Right cardiac atrium (tissue), 5 donors: ENCODE measurements at regions of chr9 and their contacts with region 1.

Region 1: GRCh38 chr9:4984621-4985385 is at the start of gene JAK2:
- DNase-seq: peak; percentile 95 to 98 (median 97)
- ATAC-seq: peak; percentile 97 to 99
- H3K4me3 ChIP-seq: peak within 1 kb of the TSS; percentile 83
- H3K27ac ChIP-seq: peak within 1 kb of the TSS; percentile 95
- H3K4me1 ChIP-seq: peaks cover 6% of the 10 kb centered on the region
- H3K27me3 ChIP-seq: no peaks in the 10 kb centered on the region
- total RNA-seq, gene JAK2: 10.4 to 14.6 (median 12.2) TPM

Region 2: DNA sequence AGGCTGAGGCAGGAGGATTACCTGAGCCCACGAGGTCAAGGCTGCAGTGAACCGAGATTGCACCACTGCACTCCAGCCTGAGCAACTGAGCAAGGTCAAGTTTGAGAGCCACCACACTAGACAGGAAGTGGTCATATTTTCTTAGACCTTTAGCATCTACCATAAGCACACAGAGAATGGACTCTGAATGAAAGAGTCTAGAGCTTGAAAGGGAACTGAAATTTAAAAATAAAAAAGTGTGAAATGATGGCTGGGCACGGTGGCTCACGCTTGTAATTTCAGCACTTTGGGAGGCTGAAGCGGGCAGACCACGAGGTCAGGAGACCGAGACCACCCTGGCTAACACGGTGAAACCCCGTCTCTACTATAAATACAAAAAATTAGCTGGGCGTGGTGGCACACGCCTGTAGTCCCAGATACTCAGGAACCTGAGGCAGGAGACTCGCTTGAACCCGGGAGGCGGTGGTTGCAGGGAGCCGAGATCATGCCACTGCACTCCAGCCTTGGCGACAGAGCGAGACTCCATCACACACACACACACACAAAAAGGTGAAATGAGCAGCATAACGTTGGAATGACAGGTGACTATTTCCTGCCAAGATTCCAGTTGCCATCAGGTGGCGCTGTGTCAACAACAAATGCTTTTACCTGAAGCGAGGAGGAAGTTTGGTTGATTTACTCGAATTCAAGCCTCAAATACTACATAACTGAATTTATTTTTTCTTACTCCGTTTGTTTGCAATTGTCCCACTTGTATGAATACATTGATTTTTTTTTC is 222.5 kb before region 1 on chr9:
- intact Hi-C with region 1: loop called (anchors 5 to 10 kb)
- DNase-seq: peak; percentile 68 to 87 (median 77)
- ATAC-seq: peak; percentile 53 to 59
- H3K4me3 ChIP-seq: peak overlapping the region; percentile 41
- H3K27ac ChIP-seq: no peak overlapping the region
- H3K4me1 ChIP-seq: no peaks in the 10 kb centered on the region
- H3K27me3 ChIP-seq: no peaks in the 10 kb centered on the region

Region 3: GRCh38 chr9:4792572-4793458 is 192.0 kb before region 1 on chr9 and contains the start of gene RCL1:
- intact Hi-C with region 1: loop called in 1 of 4 experiments (anchors 10 kb)
- DNase-seq: peak; percentile 96 to 99 (median 98)
- ATAC-seq: peak; percentile 100
- H3K4me3 ChIP-seq: peak within 1 kb of the TSS; percentile 66
- H3K27ac ChIP-seq: peak within 1 kb of the TSS; percentile 5
- H3K4me1 ChIP-seq: peaks cover 7% of the 10 kb centered on the region
- H3K27me3 ChIP-seq: no peaks in the 10 kb centered on the region
- total RNA-seq, gene RCL1: 6.1 to 8.1 (median 6.6) TPM

Region 4: DNA sequence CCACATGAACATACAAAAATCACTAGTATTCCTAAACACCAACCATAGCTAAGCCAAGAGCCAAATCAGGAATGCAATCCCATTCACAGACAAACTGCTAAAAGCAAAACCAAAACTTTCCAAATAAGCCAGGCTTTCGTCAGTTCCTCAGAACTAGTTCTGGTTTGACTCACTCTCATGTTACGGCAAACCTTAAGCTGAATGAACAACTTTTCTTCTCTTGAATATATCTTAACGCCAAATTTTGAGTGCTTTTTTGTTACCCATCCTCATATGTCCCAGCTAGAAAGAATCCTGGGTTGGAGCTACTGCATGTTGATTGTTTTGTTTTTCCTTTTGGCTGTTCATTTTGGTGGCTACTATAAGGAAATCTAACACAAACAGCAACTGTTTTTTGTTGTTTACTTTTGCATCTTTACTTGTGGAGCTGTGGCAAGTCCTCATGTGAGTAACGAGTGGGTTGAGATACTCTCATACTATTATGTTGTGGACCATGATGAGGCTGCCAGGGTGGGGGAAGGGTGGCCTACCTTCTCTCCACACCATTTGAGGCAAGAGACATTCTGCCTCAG is 525.6 kb after region 1 on chr9 and contains the start of gene PDCD1LG2:
- intact Hi-C with region 1: no loop called
- DNase-seq: peak in 1 of 3 donors; percentile 72
- ATAC-seq: peak; percentile 68 to 77
- H3K4me3 ChIP-seq: peak within 1 kb of the TSS; percentile 33
- H3K27ac ChIP-seq: peak within 1 kb of the TSS; percentile 59
- H3K4me1 ChIP-seq: peaks cover 7% of the 10 kb centered on the region
- H3K27me3 ChIP-seq: no peaks in the 10 kb centered on the region
- total RNA-seq, gene PDCD1LG2: 2.3 to 3.3 (median 2.5) TPM